Heart right ventricle (tissue), 16 donors: ENCODE measurements at regions of chr5 and their contacts with region 1.

Region 1: DNA sequence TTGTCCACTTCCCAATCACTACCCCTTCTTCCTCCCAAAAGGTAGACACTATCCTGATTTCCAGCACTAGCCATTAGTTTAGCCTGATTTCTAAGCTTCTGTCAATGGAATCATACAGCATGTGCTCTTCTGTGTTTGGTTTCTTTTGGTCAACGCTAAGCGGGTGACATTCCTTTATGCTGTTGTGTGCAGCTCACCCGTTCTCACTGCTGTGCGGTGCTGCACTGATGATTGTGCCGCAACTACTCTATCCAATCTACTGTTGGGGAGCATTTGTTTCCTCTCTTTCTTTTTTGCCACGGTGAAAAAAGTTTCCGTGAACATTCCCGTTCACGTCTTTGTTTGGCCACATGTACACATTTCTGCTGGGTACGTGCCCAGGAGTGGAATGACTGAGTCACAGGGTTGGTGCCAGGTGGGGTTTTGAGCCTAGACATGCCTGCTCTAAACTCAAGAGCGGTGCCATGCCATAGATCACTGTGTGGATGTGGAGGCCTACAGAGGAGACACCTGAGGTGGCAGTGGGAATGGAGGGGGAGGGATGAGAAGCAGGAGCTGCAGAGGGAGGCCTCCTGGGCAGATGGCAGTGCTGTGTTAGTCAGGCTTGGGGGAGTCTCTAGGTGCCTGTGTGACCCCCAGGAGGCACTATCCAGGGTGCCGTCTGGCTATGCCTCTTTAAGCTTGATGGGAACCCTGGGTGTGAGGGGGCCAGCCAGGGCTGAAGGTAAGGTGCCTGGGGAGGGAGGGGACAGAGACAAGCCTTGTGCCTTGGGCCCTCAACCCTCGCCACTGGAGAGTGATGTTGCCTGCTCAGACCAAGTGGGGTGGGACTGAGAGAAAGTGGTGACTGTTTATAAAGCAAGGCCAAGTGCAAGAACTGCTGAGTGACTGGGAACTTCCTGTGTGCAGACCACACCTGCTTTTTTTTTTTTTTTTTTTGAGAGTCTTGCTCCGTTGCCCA is 11.4 kb upstream of the ANKRD33B start:
- DNase-seq: no peak
- ATAC-seq: peak in 2 of 8 donors; percentile 13 to 40
- H3K4me3 ChIP-seq: no peak overlapping the region
- H3K27ac ChIP-seq: peak overlapping the region in 1 of 10 donors; percentile 28
- H3K4me1 ChIP-seq: peaks cover 0 to 37% (median 8%) of the 10 kb centered on the region in 9 donors
- H3K27me3 ChIP-seq: no peaks in the 10 kb centered on the region
- CTCF ChIP-seq: no peak

Region 2: DNA sequence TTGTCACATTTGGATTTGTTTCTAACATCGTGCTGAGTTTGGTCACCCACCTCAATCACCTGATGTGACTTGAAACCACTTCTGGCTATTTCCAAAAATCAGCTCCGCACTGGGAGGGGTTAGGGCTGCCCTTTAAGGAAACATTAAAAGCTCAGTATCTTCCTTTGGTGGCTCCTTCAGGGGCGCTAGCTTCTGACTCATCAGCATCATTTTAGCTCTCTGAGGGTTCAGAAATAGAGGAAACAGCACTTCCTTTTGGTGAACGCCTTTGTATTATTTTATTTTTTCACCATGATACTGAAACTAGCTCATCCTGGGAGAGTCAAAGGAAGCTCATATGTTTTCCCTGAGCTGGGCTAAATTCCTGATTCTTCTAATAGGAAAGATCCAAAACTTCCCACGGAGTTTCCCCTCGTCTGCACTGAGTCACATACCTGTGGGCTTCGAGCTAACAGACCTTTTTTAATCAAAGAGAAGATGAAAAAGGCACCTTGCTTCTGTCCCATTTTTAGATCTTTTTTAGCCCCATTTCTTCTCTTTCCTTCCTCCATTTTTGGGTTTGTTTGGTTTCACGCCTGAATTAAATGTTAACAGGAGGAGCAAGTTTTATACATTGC is 62.5 kb before region 1 on chr5:
- intact Hi-C with region 1: loop called in 1 of 10 experiments (anchors 10 kb)
- DNase-seq: no peak
- ATAC-seq: peak in 4 of 8 donors; percentile 19 to 68 (median 46)
- H3K4me3 ChIP-seq: no peak overlapping the region
- H3K27ac ChIP-seq: peak overlapping the region in 1 of 10 donors; percentile 16
- H3K4me1 ChIP-seq: peaks cover 0 to 38% (median 24%) of the 10 kb centered on the region in 9 donors
- H3K27me3 ChIP-seq: no peaks in the 10 kb centered on the region
- CTCF ChIP-seq: no peak